ENCODE measurements at regions of chr14 and their contacts with region 1.

Region 1: DNA sequence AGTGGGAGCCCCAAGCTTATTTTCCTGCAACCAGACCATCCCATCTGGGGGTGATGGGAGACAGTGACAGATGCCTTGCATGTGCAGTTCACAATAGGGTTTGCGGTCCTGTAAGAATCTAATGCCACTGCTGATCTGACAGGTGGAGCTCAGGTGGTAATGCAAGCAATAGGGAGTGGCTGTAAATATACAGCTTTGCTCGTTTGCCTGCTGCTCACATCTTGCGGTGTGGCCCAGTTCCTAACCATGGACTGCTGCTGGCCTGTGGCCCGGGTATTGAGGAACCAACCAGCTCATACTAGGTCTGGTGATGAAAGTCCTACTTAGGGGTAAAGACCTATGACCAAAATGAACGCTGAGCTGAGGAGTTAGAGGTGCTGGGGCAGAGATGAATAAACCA is 36.1 kb upstream of the CCDC88C start:
- DNase-seq: no peak
- ATAC-seq: no peak
- H3K4me3 ChIP-seq: no peak overlapping the region
- H3K4me3 Mint-ChIP-seq: no peak overlapping the region
- H3K27ac ChIP-seq: no peak overlapping the region
- H3K27ac Mint-ChIP-seq: peak overlapping the region; percentile 59 to 84
- H3K4me1 ChIP-seq: peaks cover 2 to 8% of the 10 kb centered on the region in 2 experiments
- H3K4me1 Mint-ChIP-seq: peaks cover 24 to 29% (median 28%) of the 10 kb centered on the region in 3 donors
- H3K27me3 ChIP-seq: no peaks in the 10 kb centered on the region
- H3K27me3 Mint-ChIP-seq: no peaks in the 10 kb centered on the region

Region 2: DNA sequence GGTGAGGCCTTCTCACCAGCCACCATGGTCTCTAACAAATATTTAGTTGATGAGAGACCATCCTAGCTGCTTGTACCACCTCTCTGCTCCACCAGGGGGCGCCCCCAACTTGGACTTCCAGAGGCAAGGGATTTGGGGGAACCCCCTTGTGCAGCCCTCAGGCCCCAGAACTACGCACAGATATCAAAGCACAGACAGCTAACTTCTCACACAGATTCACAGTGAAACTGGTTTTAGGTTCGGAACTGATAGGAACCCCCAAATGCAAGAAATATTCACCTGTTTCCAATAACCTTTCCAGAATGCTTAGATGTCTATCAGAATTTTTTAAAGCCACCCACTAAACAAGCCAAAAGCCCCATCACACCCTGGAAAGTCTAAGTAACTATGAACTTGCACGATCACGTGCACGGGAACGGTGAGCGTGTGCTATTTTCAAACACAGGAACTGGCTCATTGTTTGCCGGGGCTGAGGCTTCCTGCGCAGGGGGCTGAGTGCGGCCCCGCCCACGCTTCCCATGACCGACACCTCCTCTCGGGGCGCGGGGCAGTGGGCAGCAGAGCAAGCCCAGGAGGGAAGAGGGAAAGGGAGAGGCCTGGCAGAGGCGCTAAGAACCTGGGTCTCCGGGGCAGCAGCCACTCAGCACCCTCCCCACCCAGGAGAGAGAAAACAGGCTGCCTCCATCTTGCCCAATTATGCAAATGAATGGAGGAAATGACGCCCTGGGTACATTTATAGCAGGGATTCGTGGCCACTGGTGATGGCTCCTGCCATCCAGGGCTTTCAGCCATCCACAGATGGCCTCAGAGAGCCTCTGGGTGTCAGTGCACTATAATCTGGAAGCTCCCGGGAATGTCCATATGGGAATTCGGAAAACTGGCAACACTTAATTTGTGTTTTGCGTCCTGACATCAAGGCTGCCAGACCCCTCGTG is 129.8 kb before region 1 on chr14:
- CTCF ChIA-PET with region 1: no interaction called
- POLR2A ChIA-PET with region 1: no interaction called
- DNase-seq: peak; percentile 86 to 96 (median 94)
- ATAC-seq: peak; percentile 83 to 88 (median 84)
- H3K4me3 ChIP-seq: peak overlapping the region; percentile 28 to 43
- H3K4me3 Mint-ChIP-seq: peak overlapping the region; percentile 78 to 85 (median 80)
- H3K27ac ChIP-seq: peak overlapping the region; percentile 98
- H3K27ac Mint-ChIP-seq: peak overlapping the region; percentile 96 to 98
- H3K4me1 ChIP-seq: peaks cover 51 to 97% of the 10 kb centered on the region in 2 experiments
- H3K4me1 Mint-ChIP-seq: peaks cover 84 to 86% (median 86%) of the 10 kb centered on the region in 3 donors
- H3K27me3 ChIP-seq: no peaks in the 10 kb centered on the region
- H3K27me3 Mint-ChIP-seq: no peaks in the 10 kb centered on the region

Region 3: DNA sequence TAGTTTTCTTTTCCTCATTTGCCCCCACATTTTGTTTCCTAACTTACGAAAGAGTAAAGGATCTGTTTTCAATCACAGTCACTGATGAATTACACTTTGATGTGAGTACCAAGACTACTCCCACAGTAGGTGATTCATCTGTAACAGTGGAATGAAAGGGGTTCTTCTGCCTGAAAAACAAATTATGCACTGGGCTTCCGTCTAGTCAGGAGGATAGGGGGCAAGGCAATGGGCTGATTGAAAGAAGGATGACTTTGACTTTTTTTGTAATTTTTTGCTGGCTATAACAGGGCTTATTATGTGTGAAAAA is 279.4 kb after region 1 on chr14:
- CTCF ChIA-PET with region 1: no interaction called
- POLR2A ChIA-PET with region 1: no interaction called
- DNase-seq: no peak
- ATAC-seq: no peak
- H3K4me3 ChIP-seq: no peak overlapping the region
- H3K4me3 Mint-ChIP-seq: no peak overlapping the region
- H3K27ac ChIP-seq: no peak overlapping the region
- H3K27ac Mint-ChIP-seq: no peak overlapping the region
- H3K4me1 ChIP-seq: no peaks in the 10 kb centered on the region
- H3K4me1 Mint-ChIP-seq: peaks cover 0 to 2% (median 0%) of the 10 kb centered on the region in 3 donors
- H3K27me3 ChIP-seq: peaks cover 0 to 3% of the 10 kb centered on the region in 2 experiments
- H3K27me3 Mint-ChIP-seq: peaks cover 0 to 3% of the 10 kb centered on the region in 2 donors

Region 4: DNA sequence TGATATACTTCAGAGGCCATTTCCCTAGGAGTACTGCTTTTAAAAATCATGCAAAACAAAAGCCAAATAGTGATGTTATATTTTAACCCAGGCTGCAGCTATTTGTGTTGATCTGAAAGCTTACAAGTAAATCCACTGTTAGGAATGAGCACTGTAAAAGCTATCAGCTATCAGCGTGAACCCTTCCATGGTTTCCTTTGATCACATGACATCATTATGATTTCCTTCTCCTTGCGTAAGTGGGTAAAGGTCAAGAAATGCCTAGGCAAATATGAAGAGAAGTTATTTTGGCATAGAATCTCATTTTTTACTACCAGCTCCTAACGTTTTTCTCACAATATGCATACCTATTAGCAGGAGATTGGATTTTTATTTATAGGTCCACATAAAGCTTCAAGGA is 326.7 kb after region 1 on chr14:
- CTCF ChIA-PET with region 1: no interaction called
- POLR2A ChIA-PET with region 1: interaction called in 1 of 2 experiments, 11 read pairs
- DNase-seq: no peak
- ATAC-seq: no peak
- H3K4me3 ChIP-seq: no peak overlapping the region
- H3K4me3 Mint-ChIP-seq: no peak overlapping the region
- H3K27ac ChIP-seq: no peak overlapping the region
- H3K27ac Mint-ChIP-seq: peak overlapping the region in 1 of 2 donors; percentile 11
- H3K4me1 ChIP-seq: no peaks in the 10 kb centered on the region
- H3K4me1 Mint-ChIP-seq: peaks cover 5 to 10% (median 8%) of the 10 kb centered on the region in 3 donors
- H3K27me3 ChIP-seq: no peaks in the 10 kb centered on the region
- H3K27me3 Mint-ChIP-seq: no peaks in the 10 kb centered on the region

Region 5: DNA sequence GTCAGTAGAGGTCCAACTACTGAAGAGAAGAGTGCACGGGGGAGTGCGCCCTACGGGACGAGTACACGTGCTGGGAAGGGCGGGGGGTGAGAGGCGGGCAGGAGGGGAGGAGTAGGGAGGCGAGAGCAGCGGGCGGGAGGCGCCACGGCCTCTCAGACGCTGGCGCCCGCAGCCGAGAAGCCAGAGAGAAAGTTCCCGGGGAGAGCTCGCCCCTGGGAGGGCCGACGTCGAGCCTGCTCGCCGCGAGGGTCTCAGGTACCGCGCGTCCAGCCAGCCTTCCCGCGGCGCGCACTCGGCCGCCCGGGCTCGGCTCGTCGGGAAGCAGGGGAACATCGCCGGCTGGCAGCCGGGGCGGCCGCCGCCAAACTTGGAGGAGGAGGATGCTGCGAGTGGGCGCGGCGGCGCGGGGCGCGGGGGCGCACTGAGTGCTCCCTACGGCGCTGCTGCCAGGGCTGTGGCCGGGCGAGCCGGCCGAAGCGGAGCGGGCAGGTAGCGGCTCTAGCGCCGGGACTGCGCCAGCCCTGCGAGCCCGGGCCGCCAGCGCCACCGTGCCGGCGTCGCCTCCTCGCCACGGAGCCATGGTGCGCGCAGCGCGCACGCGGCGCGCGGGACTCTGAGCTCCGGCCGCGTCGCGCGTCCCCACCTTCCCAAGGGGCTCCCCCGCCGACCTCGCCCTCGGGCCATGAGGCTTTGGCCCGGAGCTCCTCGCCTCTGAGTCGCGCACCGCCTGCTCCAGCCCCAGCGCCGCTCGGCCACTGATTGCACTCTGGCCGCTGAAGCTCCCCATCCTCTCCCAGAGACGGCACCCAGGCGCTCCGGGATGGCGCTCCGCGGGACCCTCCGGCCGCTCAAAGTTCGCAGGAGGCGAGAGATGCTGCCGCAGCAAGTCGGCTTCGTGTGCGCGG is 869.5 kb after region 1 on chr14 and contains the start of gene SLC24A4:
- CTCF ChIA-PET with region 1: no interaction called
- POLR2A ChIA-PET with region 1: no interaction called
- DNase-seq: peak in 2 of 35 experiments; percentile 1 to 5
- ATAC-seq: peak in 2 of 4 experiments; percentile 32 to 36
- H3K4me3 ChIP-seq: peak within 1 kb of the TSS in 1 of 2 donors; percentile 42
- H3K4me3 Mint-ChIP-seq: peak within 1 kb of the TSS in 2 of 3 donors; percentile 17 to 68
- H3K27ac ChIP-seq: no peak within 1 kb of the TSS
- H3K27ac Mint-ChIP-seq: peak within 1 kb of the TSS in 1 of 2 donors; percentile 17
- H3K4me1 ChIP-seq: peaks cover 0 to 12% of the 10 kb centered on the region in 2 experiments
- H3K4me1 Mint-ChIP-seq: peaks cover 0 to 12% (median 7%) of the 10 kb centered on the region in 3 donors
- H3K27me3 ChIP-seq: peaks cover 12 to 47% of the 10 kb centered on the region in 2 experiments
- H3K27me3 Mint-ChIP-seq: peaks cover 46 to 66% of the 10 kb centered on the region in 2 donors
- total RNA-seq, gene SLC24A4: 0.14 to 0.15 TPM in 2 of 5 donors, not detected in the others